PC-9 (cell line): ENCODE measurements at regions of chr21 and their contacts with region 1.

Region 1: GRCh38 chr21:21283810-21284209 is 285.6 kb downstream of the NCAM2 start:
- DNase-seq: no peak
- H3K4me3 ChIP-seq: no peak overlapping the region
- H3K27ac ChIP-seq: no peak overlapping the region
- H3K4me1 ChIP-seq: no peaks in the 10 kb centered on the region
- H3K27me3 ChIP-seq: no peaks in the 10 kb centered on the region
- CTCF ChIP-seq: no peak

Region 2: GRCh38 chr21:21179619-21180298 is 104.1 kb before region 1 on chr21:
- CTCF ChIA-PET with region 1: no interaction called
- POLR2A ChIA-PET with region 1: no interaction called
- intact Hi-C with region 1: no loop called
- DNase-seq: no peak
- H3K4me3 ChIP-seq: no peak overlapping the region
- H3K27ac ChIP-seq: no peak overlapping the region
- H3K4me1 ChIP-seq: no peaks in the 10 kb centered on the region
- H3K27me3 ChIP-seq: no peaks in the 10 kb centered on the region
- CTCF ChIP-seq: no peak

Region 3: GRCh38 chr21:21295303-21295702 is 11.5 kb after region 1 on chr21:
- CTCF ChIA-PET with region 1: no interaction called
- POLR2A ChIA-PET with region 1: no interaction called
- intact Hi-C with region 1: loop called (anchors 1 kb)
- DNase-seq: no peak
- H3K4me3 ChIP-seq: no peak overlapping the region
- H3K27ac ChIP-seq: no peak overlapping the region
- H3K4me1 ChIP-seq: no peaks in the 10 kb centered on the region
- H3K27me3 ChIP-seq: no peaks in the 10 kb centered on the region
- CTCF ChIP-seq: no peak